HCT116 (cell line): ENCODE measurements at regions of chr6 and their contacts with region 1.

Region 1: DNA sequence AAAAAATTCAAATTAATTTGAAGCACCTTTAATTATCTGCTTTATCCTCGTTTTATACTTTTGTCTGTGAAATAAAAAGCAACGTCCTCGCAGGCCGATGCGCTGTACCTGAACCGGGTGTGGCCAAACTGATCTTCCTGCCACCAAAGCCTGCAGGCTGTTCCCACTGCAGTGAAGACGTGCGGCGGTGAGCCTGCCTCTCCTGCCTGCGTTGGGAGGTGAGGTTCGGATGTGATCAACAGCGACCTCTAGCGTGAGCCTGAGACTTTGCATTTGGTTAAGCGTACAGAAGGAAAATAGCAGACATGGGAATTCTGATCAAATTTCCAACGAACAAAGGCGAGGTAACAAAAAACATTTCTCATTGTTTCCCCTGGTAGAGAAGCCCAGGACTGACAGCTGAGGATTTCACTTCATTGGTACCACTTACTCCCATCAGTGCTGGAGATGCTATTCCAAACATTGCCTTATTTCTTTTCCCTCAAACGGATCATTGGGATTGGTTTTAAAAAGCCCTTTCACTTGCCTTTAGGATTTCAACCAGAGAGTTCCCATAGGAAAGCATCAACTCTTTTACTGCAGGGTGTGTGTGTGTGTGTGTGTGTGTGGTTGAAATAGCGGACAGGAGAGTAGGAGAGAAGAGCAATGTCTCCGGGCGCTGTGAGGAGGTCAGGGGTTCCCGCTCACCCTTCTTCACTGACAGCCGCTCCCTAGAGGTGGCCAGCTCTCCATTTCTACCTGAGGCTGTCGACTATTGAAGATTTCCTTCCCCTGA is 56.6 kb upstream of the CCN6 start:
- DNase-seq: peak; percentile 63
- ATAC-seq: peak; percentile 98
- H3K4me3 ChIP-seq: no peak overlapping the region
- H3K27ac ChIP-seq: no peak overlapping the region
- H3K4me1 ChIP-seq: peaks cover 7 to 23% of the 10 kb centered on the region in 2 experiments; a peak in 3 of 4 replicates
- H3K27me3 ChIP-seq: no peaks in the 10 kb centered on the region
- CTCF ChIP-seq: peak; percentile 87 to 94 (median 87)
- POLR2A ChIP-seq: no peak
- RAD21 ChIP-seq: peak; percentile 97

Region 2: GRCh38 chr6:111721753-111722154 is 275.5 kb before region 1 on chr6:
- CTCF ChIA-PET with region 1: no interaction called
- POLR2A ChIA-PET with region 1: no interaction called
- RAD21 ChIA-PET with region 1: no interaction called
- intact Hi-C with region 1: loop called (anchors 1 kb)
- DNase-seq: peak; percentile 13
- ATAC-seq: peak; percentile 67; the same call in 1 of the 2 replicates
- H3K4me3 ChIP-seq: no peak overlapping the region
- H3K27ac ChIP-seq: no peak overlapping the region
- H3K4me1 ChIP-seq: no peaks in the 10 kb centered on the region
- H3K27me3 ChIP-seq: no peaks in the 10 kb centered on the region
- CTCF ChIP-seq: peak; percentile 54 to 77 (median 74); a peak in 4 of 6 replicates
- POLR2A ChIP-seq: no peak
- RAD21 ChIP-seq: peak; percentile 67

Region 3: GRCh38 chr6:111873178-111874024 is 123.9 kb before region 1 on chr6 and contains the start of gene FYN:
- CTCF ChIA-PET with region 1: no interaction called
- POLR2A ChIA-PET with region 1: no interaction called
- RAD21 ChIA-PET with region 1: no interaction called
- intact Hi-C with region 1: loop called (anchors 2 kb)
- DNase-seq: peak; percentile 86
- ATAC-seq: peak; percentile 96
- H3K4me3 ChIP-seq: peak within 1 kb of the TSS; percentile 51 to 64
- H3K27ac ChIP-seq: peak within 1 kb of the TSS; percentile 39; the same call in 1 of the 2 replicates
- H3K4me1 ChIP-seq: peaks cover 6 to 13% of the 10 kb centered on the region in 2 experiments
- H3K27me3 ChIP-seq: no peaks in the 10 kb centered on the region
- CTCF ChIP-seq: peak in 2 of 3 experiments; percentile 12 to 34; a peak in 2 of 6 replicates
- POLR2A ChIP-seq: no peak
- RAD21 ChIP-seq: 0 out of 2 replicates have a peak, but pooled peaks have one; percentile 22
- total RNA-seq, gene FYN: 18.5 TPM

Region 4: DNA sequence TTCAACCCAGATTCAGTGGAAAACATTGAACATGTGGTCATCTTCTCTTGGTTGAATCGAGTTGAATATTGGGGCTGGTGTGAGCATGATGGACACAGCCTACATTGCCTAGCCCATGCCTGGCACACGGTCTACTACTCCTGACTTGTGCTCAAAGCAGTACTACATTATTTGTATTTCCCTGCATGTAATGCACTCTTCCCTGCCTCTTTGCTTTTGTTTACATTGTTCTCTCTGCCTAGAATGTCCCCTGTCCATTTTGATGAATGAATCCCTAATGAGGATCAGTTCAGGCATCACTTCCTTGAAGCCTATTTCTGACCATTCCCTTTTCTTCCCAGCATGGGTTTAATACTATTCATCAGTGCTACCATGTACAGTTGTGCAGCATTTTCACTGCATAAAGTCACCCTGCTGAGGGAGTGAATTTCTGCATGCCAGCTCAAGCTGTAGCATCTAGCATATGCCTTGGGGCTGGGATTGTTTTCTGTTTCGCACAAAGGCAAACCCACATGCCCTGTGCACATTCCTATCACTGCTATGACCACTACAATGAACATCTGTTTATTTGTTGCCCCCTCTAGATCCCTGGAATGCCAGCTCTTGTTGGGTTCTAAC is 18.6 kb before region 1 on chr6:
- CTCF ChIA-PET with region 1: no interaction called
- POLR2A ChIA-PET with region 1: no interaction called
- RAD21 ChIA-PET with region 1: no interaction called
- intact Hi-C with region 1: no loop called
- DNase-seq: no peak
- ATAC-seq: no peak
- H3K4me3 ChIP-seq: no peak overlapping the region
- H3K27ac ChIP-seq: no peak overlapping the region
- H3K4me1 ChIP-seq: peaks cover 8 to 20% of the 10 kb centered on the region in 2 experiments; a peak in 3 of 4 replicates
- H3K27me3 ChIP-seq: no peaks in the 10 kb centered on the region
- CTCF ChIP-seq: no peak
- POLR2A ChIP-seq: no peak
- RAD21 ChIP-seq: no peak

Region 5: GRCh38 chr6:112043032-112044007 is 46.1 kb after region 1 on chr6:
- CTCF ChIA-PET with region 1: no interaction called
- POLR2A ChIA-PET with region 1: no interaction called
- RAD21 ChIA-PET with region 1: no interaction called
- intact Hi-C with region 1: loop called (anchors 5 kb)
- DNase-seq: peak; percentile 82
- ATAC-seq: peak; percentile 95
- H3K4me3 ChIP-seq: peak overlapping the region; percentile 61 to 72
- H3K27ac ChIP-seq: peak overlapping the region; percentile 44; the same call in 1 of the 2 replicates
- H3K4me1 ChIP-seq: 0 out of 4 replicates have a peak, but pooled peaks cover 0 to 4% of the 10 kb centered on the region in 2 experiments
- H3K27me3 ChIP-seq: no peaks in the 10 kb centered on the region
- CTCF ChIP-seq: peak; percentile 94 to 98 (median 96)
- POLR2A ChIP-seq: peak; percentile 23
- RAD21 ChIP-seq: peak; percentile 98

Region 6: GRCh38 chr6:112139052-112139451 is 141.8 kb after region 1 on chr6:
- CTCF ChIA-PET with region 1: no interaction called
- POLR2A ChIA-PET with region 1: no interaction called
- RAD21 ChIA-PET with region 1: no interaction called
- intact Hi-C with region 1: no loop called
- DNase-seq: no peak
- ATAC-seq: no peak
- H3K4me3 ChIP-seq: no peak overlapping the region
- H3K27ac ChIP-seq: no peak overlapping the region
- H3K4me1 ChIP-seq: no peaks in the 10 kb centered on the region
- H3K27me3 ChIP-seq: no peaks in the 10 kb centered on the region
- CTCF ChIP-seq: no peak
- POLR2A ChIP-seq: no peak
- RAD21 ChIP-seq: no peak

Region 7: GRCh38 chr6:112502351-112503090 is 505.3 kb after region 1 on chr6:
- CTCF ChIA-PET with region 1: no interaction called
- POLR2A ChIA-PET with region 1: no interaction called
- RAD21 ChIA-PET with region 1: no interaction called
- intact Hi-C with region 1: no loop called
- DNase-seq: no peak
- ATAC-seq: peak; percentile 49
- H3K4me3 ChIP-seq: no peak overlapping the region
- H3K27ac ChIP-seq: no peak overlapping the region
- H3K4me1 ChIP-seq: no peaks in the 10 kb centered on the region
- H3K27me3 ChIP-seq: no peaks in the 10 kb centered on the region
- CTCF ChIP-seq: peak; percentile 31 to 49 (median 33); a peak in 4 of 6 replicates
- POLR2A ChIP-seq: no peak
- RAD21 ChIP-seq: peak; percentile 52